ENCODE measurements at regions of chr11 and their contacts with region 1.

Region 1: GRCh38 chr11:77047007-77047927 is 13.1 kb downstream of the B3GNT6 start:
- DNase-seq: peak; percentile 90
- ATAC-seq: peak; percentile 81
- H3K4me3 ChIP-seq: peak overlapping the region; percentile 29 to 45
- H3K27ac ChIP-seq: peak overlapping the region; percentile 15; the same call in 1 of the 2 replicates
- H3K4me1 ChIP-seq: peaks cover 2 to 20% of the 10 kb centered on the region in 2 experiments; a peak in 3 of 4 replicates
- H3K27me3 ChIP-seq: no peaks in the 10 kb centered on the region
- CTCF ChIP-seq: peak; percentile 67 to 88 (median 68)
- POLR2A ChIP-seq: no peak
- RAD21 ChIP-seq: peak; percentile 73

Region 2: DNA sequence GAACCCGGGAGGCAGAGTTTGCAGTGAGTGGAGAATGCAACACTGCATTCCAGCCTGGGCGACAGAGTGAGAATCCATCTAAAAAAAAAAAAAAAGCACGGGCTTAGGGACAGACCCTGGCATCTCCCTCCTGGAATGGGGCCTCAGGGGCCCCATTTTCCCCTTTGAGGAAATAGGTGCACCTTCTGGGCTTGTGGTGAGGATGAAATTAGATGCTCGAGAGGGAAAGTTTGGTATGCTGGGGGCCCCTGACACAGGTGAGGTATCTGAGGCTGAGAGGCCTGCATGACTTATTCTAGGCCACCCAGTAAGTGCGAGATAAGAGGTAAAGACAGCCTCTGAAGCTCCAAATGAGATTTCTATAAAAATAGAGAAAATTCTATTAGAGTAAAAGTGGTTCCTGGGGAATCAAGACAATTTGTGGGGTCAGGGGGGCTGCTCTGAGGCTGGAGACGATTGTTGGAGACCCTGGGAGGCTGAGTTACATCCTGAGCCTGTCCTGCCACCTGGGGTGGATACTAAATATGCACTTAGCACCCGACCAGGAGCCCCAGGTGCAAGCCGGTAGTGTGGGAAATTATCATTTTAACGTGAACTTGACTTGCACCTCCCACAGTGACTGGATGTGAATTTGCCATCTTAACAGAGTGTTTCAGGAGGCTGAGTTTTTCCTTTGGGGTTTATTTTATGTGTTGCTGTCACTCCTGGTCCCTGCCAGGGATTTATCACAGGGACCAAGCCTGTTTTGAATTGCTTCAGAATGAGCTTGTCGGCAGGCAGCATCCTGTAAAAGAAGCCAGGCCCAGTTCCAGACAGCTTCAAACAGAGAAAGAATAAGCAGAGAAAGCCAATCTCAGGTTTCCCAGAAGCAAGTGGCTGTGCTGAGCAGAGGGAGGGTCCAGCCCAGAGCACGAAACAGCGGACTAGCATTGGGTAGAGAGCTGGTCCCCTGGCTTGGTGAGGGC is 312.5 kb before region 1 on chr11:
- CTCF ChIA-PET with region 1: interaction called, 9 read pairs
- POLR2A ChIA-PET with region 1: no interaction called
- RAD21 ChIA-PET with region 1: interaction called in 1 of 2 experiments, 3 read pairs
- intact Hi-C with region 1: loop called (anchors 1 kb)
- DNase-seq: no peak
- ATAC-seq: no peak
- H3K4me3 ChIP-seq: no peak overlapping the region
- H3K27ac ChIP-seq: no peak overlapping the region
- H3K4me1 ChIP-seq: no peaks in the 10 kb centered on the region
- H3K27me3 ChIP-seq: no peaks in the 10 kb centered on the region; the same call in 1 of the 2 replicates
- CTCF ChIP-seq: no peak
- POLR2A ChIP-seq: no peak
- RAD21 ChIP-seq: no peak

Region 3: DNA sequence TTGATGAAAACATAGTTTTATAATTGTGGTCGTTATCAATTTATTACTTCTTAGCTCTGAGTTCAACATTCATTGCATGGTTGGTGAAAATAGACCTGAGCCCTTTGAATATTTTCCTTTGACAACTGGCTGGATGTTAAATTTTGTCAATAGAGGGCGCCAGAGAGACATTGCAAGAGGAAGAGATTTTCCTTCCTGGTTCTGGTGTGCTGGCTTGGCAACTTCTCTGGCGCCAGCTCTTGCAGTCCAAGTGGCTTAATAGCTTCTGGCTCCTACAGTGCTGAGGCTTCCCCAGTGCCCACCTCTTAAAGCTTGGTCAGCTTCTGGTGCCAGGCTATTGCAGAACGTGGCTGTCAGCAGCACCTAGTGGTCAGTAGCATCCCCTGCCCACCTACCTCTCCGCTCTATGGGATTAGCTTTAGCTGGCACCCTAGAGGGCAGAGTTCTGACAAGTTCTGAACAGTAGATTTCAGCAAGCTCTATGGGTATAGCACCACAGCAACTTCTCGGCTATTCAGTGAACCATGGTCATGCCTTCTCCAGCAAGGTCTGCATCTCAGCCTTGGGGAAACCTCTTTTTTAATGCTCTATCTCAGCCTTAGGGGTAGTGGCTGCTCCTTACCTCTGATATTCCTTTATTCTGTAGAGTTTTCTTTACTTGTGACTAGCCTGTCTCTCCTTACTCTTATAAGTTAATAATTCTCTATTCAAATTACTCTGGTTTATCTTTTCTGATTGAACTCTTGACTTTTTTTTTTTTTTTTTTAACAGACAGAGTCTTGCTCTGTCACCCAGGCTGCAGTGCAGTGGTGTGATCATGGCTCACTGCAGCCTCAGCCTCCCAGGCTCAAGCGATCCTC is 127.2 kb before region 1 on chr11:
- CTCF ChIA-PET with region 1: interaction called, 69 read pairs
- POLR2A ChIA-PET with region 1: no interaction called
- RAD21 ChIA-PET with region 1: interaction called, 5 to 11 read pairs
- intact Hi-C with region 1: loop called (anchors 1 kb)
- DNase-seq: peak; percentile 60
- ATAC-seq: peak; percentile 87
- H3K4me3 ChIP-seq: no peak overlapping the region; a peak in 1 of 4 replicates
- H3K27ac ChIP-seq: no peak overlapping the region
- H3K4me1 ChIP-seq: peaks cover 7 to 17% of the 10 kb centered on the region in 2 experiments; a peak in 3 of 4 replicates
- H3K27me3 ChIP-seq: no peaks in the 10 kb centered on the region
- CTCF ChIP-seq: peak; percentile 86 to 98 (median 90)
- POLR2A ChIP-seq: no peak
- RAD21 ChIP-seq: peak; percentile 87

Region 4: DNA sequence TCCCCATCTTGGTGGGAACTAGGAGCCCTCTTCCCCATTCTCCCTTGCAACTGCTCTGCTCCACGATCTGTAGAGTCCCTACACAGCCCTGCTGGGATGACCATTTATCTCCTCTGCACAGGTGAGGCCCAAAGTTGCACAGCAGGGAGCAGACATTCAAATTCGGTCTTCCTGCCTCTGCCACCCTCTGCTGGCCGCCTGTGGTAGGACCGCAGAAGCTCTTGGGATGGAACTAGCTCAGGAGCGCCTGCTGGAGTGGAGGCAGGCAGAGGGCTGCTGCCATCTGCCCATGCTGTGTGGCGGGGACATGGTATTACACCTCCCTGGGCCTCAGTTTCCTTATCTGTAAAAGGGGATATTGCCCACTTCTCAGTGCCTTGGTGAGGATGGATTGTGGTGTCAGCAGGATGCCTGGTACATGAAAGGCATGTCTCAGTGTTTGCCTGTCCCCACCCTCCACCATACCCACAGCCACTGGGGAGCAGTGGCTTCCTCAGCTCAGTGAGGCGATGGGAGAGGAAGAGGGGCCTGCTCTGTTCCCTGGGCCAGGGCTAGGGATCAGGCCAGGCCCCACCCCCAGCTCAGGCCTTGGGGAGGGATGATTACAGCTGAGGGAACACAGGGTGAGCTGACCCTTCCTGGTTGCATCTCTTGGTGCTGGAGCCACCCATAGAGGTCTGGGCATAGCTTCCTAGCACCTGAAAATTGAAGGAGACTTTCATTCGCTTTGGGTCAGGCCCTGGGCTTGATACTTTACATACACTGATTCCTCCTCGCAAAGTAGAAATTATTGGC is 44.1 kb after region 1 on chr11:
- CTCF ChIA-PET with region 1: interaction called, 98 read pairs
- POLR2A ChIA-PET with region 1: interaction called, 23 read pairs
- RAD21 ChIA-PET with region 1: interaction called, 24 to 29 read pairs
- intact Hi-C with region 1: loop called (anchors 1 kb)
- DNase-seq: peak; percentile 68
- ATAC-seq: peak; percentile 96
- H3K4me3 ChIP-seq: no peak overlapping the region
- H3K27ac ChIP-seq: no peak overlapping the region
- H3K4me1 ChIP-seq: peaks cover 2 to 11% of the 10 kb centered on the region in 2 experiments; a peak in 1 of 4 replicates
- H3K27me3 ChIP-seq: no peaks in the 10 kb centered on the region
- CTCF ChIP-seq: peak; percentile 95 to 99 (median 97)
- POLR2A ChIP-seq: no peak
- RAD21 ChIP-seq: peak; percentile 96

Region 5: DNA sequence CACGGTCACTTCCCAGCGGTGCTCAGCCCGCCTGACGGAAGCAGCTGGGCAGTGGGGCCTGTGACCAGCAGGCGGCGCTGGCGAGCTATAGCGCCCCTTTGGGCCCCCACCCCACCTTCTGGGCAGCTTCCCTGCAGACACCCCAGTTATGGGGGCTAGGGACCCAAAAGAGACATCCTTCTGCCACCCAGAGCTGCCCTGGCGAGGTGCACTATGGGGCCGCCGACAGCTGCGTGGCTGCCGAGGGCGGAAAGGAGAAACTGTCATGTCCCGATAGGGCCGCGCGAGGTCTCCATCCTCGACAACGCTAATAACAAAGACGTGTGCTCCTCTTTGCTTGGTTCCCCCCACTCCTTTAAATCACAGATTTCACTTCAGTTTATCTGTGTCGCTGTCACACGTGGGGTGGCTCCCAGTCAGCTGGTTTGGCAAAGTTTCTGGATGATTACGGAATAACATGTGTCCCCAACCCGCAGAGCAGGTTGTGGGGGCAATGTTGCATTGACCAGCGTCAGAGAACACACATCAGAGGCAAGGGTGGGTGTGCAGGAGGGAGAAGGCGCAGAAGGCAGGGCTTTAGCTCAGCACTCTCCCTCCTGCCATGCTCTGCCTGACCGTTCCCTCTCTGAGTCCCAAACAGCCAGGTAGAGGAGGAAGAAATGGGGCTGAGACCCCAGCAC is 80.1 kb after region 1 on chr11:
- CTCF ChIA-PET with region 1: interaction called, 13 read pairs
- POLR2A ChIA-PET with region 1: no interaction called
- RAD21 ChIA-PET with region 1: interaction called in 1 of 2 experiments, 3 read pairs
- intact Hi-C with region 1: no loop called
- DNase-seq: no peak
- ATAC-seq: peak; percentile 89
- H3K4me3 ChIP-seq: peak overlapping the region; percentile 43 to 60
- H3K27ac ChIP-seq: no peak overlapping the region; the same call in 1 of the 2 replicates
- H3K4me1 ChIP-seq: peaks cover 3 to 15% of the 10 kb centered on the region in 2 experiments; a peak in 3 of 4 replicates
- H3K27me3 ChIP-seq: no peaks in the 10 kb centered on the region
- CTCF ChIP-seq: peak; percentile 99
- POLR2A ChIP-seq: no peak
- RAD21 ChIP-seq: peak; percentile 84

Region 6: DNA sequence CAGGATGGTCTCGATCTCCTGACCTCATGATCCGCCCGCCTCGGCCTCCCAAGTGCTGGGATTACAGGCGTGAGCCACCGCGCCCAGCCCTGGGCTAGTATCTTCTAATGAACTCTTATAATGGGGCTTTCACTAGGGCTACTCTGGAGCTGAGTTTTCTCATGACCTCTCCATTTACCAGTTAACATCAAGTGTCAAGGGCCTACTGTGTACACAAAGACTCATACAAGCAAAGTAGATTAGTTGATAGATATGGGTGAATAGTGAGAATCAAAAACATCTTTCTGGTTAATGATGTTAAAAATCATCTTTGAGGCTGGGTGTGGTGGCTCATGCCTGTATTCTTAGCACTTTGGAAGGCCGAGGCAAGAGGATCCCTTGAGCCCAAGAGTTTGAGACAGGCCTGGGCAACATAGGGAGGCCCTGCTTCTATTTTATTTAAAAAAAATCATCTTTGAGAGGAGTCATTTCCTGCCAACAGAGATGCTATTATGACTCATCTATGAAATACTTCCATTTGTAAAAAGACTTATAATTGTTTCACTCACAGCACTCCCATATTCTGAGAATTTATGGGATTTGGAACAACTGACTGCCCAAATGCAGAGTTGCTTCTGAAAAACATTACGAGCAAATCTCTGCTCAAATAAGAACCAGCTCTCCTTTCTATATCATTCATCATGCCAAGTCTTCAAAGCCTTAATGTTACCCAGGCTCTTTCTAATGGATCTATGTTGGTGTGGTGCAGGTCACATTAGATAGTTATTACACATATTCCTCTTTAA is 197.2 kb after region 1 on chr11:
- CTCF ChIA-PET with region 1: no interaction called
- POLR2A ChIA-PET with region 1: no interaction called
- RAD21 ChIA-PET with region 1: no interaction called
- intact Hi-C with region 1: no loop called
- DNase-seq: no peak
- ATAC-seq: no peak
- H3K4me3 ChIP-seq: no peak overlapping the region
- H3K27ac ChIP-seq: no peak overlapping the region
- H3K4me1 ChIP-seq: peaks cover 0 to 12% of the 10 kb centered on the region in 2 experiments; a peak in 2 of 4 replicates
- H3K27me3 ChIP-seq: no peaks in the 10 kb centered on the region
- CTCF ChIP-seq: no peak
- POLR2A ChIP-seq: no peak
- RAD21 ChIP-seq: no peak

Region 7: DNA sequence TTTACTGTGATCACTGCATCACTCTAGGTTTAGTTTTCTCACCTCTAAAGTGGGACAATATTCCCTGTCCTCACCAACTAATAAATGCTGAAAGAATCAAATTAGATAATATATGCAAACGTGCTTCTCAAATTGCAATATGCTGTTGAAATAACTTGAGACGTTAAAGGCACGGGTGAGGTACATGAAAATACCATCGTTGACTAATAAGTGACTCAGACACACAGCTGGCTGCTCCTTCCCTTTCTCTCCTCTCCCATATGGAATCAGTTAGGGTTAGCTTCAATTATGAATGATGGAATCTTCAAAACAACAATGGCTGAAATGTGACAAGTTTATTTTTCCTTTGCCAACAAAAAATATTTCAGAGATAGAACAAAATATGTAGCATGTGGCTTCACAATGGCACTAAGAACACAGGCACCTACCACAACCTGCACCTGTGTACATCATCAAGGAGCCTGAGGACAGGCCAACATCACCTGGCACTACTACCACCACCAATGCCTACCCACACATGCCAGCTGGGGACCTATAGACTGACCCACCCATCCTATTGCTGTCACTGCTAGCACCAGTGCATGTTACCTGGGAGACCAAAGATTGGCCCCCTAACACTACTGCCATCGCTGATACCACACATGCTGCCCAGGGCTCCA is 240.5 kb after region 1 on chr11:
- CTCF ChIA-PET with region 1: no interaction called
- POLR2A ChIA-PET with region 1: no interaction called
- RAD21 ChIA-PET with region 1: no interaction called
- intact Hi-C with region 1: no loop called
- DNase-seq: no peak
- ATAC-seq: no peak; the same call in 1 of the 2 replicates
- H3K4me3 ChIP-seq: no peak overlapping the region
- H3K27ac ChIP-seq: no peak overlapping the region
- H3K4me1 ChIP-seq: peaks cover 0 to 7% of the 10 kb centered on the region in 2 experiments; a peak in 1 of 4 replicates
- H3K27me3 ChIP-seq: no peaks in the 10 kb centered on the region
- CTCF ChIP-seq: no peak
- POLR2A ChIP-seq: no peak
- RAD21 ChIP-seq: no peak

Region 8: GRCh38 chr11:77547863-77548551 is 500.7 kb after region 1 on chr11:
- CTCF ChIA-PET with region 1: interaction called, 3 read pairs
- POLR2A ChIA-PET with region 1: no interaction called
- RAD21 ChIA-PET with region 1: interaction called in 1 of 2 experiments, 3 read pairs
- intact Hi-C with region 1: loop called (anchors 5 kb)
- DNase-seq: peak; percentile 37
- ATAC-seq: peak; percentile 67
- H3K4me3 ChIP-seq: no peak overlapping the region
- H3K27ac ChIP-seq: no peak overlapping the region
- H3K4me1 ChIP-seq: no peaks in the 10 kb centered on the region
- H3K27me3 ChIP-seq: no peaks in the 10 kb centered on the region
- CTCF ChIP-seq: peak; percentile 49 to 93 (median 64)
- POLR2A ChIP-seq: no peak
- RAD21 ChIP-seq: peak; percentile 91